OCI-LY7 (cell line): ENCODE measurements at regions of chr5 and their contacts with region 1.

Region 1: DNA sequence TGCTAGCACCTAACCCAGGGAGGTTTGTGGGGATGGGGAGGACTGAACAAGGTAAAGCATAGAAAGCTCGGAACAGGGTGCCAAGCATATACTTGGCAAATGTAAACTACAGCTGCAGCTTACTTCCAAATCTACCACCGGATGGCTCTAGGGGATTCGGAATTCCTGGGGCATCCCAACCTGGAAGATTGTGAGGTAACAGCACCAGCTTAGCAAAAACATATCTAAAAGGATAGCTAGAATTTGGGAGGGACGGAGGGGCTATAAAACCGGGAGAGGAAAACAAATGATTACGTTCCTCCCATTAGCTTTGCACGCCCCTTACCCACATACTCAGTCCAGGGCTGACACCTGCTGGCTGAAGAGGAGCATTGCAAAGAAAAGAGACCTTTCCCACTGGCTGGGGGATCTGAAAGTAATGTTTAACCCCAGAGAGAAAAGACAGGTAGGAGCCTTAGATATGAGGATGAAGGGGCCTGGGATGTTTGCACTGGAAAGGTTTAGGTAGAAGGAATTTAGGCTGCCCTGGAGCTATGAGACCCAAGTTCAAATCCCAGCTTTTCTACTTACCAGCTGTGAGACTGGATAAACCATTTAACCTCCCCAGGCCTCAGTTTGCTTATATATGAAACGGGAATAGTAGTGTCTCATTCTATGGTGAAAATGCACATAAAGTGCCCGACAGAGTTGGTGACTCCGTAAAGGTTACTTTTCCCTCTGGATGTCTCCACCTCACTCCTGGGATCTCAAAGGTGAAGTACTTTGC is 73.6 kb downstream of the FAM114A2 start:
- DNase-seq: peak; percentile 74
- H3K4me3 ChIP-seq: no peak overlapping the region
- H3K27ac ChIP-seq: no peak overlapping the region
- H3K4me1 ChIP-seq: no peaks in the 10 kb centered on the region
- CTCF ChIP-seq: peak; percentile 95

Region 2: GRCh38 chr5:152379331-152379730 is 1585.7 kb before region 1 on chr5:
- CTCF ChIA-PET with region 1: no interaction called
- POLR2A ChIA-PET with region 1: interaction called, 10 read pairs
- intact Hi-C with region 1: no loop called
- DNase-seq: no peak
- H3K4me3 ChIP-seq: no peak overlapping the region
- H3K27ac ChIP-seq: no peak overlapping the region
- H3K4me1 ChIP-seq: no peaks in the 10 kb centered on the region
- CTCF ChIP-seq: no peak

Region 3: GRCh38 chr5:152532714-152533113 is 1432.3 kb before region 1 on chr5:
- CTCF ChIA-PET with region 1: interaction called, 3 read pairs
- POLR2A ChIA-PET with region 1: no interaction called
- intact Hi-C with region 1: loop called (anchors 10 kb)
- DNase-seq: peak; percentile 54
- H3K4me3 ChIP-seq: no peak overlapping the region
- H3K27ac ChIP-seq: no peak overlapping the region
- H3K4me1 ChIP-seq: no peaks in the 10 kb centered on the region
- CTCF ChIP-seq: peak; percentile 77

Region 4: GRCh38 chr5:152560512-152561137 is 1404.4 kb before region 1 on chr5:
- CTCF ChIA-PET with region 1: no interaction called
- POLR2A ChIA-PET with region 1: no interaction called
- intact Hi-C with region 1: loop called (anchors 2 kb)
- DNase-seq: peak; percentile 46
- H3K4me3 ChIP-seq: no peak overlapping the region
- H3K27ac ChIP-seq: no peak overlapping the region
- H3K4me1 ChIP-seq: no peaks in the 10 kb centered on the region
- CTCF ChIP-seq: peak; percentile 86

Region 5: GRCh38 chr5:153159611-153160010 is 805.5 kb before region 1 on chr5:
- CTCF ChIA-PET with region 1: no interaction called
- POLR2A ChIA-PET with region 1: no interaction called
- intact Hi-C with region 1: loop called (anchors 10 kb)
- DNase-seq: no peak
- H3K4me3 ChIP-seq: no peak overlapping the region
- H3K27ac ChIP-seq: no peak overlapping the region
- H3K4me1 ChIP-seq: no peaks in the 10 kb centered on the region
- CTCF ChIP-seq: no peak

Region 6: GRCh38 chr5:153827397-153827796 is 137.7 kb before region 1 on chr5:
- CTCF ChIA-PET with region 1: no interaction called
- POLR2A ChIA-PET with region 1: no interaction called
- intact Hi-C with region 1: loop called (anchors 10 kb)
- DNase-seq: peak; percentile 39
- H3K4me3 ChIP-seq: no peak overlapping the region
- H3K27ac ChIP-seq: peak overlapping the region; percentile 79
- H3K4me1 ChIP-seq: peaks cover 50% of the 10 kb centered on the region
- CTCF ChIP-seq: peak; percentile 75

Region 7: DNA sequence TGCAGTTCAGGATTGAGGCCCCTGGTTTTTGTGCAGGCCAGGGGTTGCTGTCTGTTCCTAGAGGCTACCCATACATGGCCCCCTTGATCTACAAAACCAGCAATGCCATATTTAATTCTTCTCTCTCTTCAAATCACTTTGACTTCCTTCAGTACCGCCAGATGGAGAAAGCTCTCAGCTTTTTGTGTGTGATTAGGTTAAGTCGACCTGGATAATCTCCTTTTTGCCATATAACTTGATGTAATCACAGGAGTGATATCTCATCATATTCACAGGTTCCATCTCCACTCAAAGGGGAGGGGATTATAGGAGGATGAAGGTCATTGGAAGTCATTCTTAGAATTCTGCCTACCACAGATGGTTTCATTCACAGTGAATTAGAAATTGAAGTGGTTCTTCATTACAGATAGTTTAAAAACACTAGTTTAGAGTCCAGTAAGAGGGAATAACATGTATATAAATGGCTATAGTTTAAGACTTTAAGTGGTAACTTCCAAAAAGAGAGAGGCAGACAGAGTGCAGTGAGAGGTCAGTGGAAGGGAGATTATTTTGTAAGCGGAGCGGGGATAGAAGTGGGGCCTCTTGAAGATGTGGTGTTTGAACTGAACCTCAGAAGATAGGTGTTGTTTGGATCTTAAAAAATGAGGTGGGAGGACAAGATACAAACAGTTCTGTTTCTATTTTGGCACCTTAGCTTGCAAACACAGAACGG is 311.4 kb after region 1 on chr5:
- CTCF ChIA-PET with region 1: interaction called, 10 read pairs
- POLR2A ChIA-PET with region 1: no interaction called
- intact Hi-C with region 1: no loop called
- DNase-seq: no peak
- H3K4me3 ChIP-seq: no peak overlapping the region
- H3K27ac ChIP-seq: no peak overlapping the region
- H3K4me1 ChIP-seq: no peaks in the 10 kb centered on the region
- CTCF ChIP-seq: no peak